Activated CD4-positive, alpha-beta memory T cell treated with anti-CD3 and anti-CD28 coated beads for 36 hours (primary cell): ENCODE measurements at regions of chr7 and their contacts with region 1.

Region 1: GRCh38 chr7:78039790-78040776 is 241.5 kb downstream of the PHTF2 start:
- DNase-seq: peak; percentile 70
- H3K4me3 Mint-ChIP-seq: no peak overlapping the region
- H3K27ac Mint-ChIP-seq: no peak overlapping the region
- H3K4me1 Mint-ChIP-seq: peaks cover 4% of the 10 kb centered on the region
- H3K27me3 Mint-ChIP-seq: peaks cover 16% of the 10 kb centered on the region

Region 2: DNA sequence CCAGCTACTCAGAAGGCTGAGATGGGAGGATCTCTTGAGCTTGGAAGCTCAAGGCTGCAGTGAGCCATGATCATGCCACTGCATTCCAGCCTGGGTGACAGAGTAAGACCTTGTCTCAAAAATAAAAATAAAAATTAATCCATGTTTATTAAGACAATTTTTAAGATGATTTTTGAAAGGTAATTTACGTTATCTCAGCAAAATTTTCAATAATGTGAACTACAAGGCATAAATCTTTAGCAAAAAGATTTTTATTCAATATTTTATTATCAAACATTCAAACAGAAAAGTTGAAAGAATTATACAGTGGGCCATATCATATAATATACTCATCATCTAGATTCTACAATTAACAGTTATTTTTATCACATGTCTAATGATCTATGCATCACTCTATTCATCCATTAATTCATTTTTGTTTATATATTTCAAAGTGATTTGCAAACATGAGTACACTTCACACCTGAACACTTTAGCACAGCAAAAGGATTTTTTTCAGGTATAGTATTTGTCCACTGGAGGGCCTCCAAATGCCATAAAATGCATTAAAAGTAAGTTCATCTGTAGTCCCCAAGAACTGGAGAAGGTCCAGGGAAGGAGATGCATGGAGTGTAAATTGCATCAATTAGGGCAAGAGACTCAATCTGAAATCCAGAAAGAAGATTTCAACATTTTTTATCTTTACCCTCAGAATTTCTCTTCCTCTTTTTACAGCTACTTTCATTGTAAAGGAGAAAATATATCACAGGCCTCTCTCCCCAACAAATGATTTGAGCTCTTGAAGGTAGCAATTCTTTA is 382.5 kb before region 1 on chr7:
- CTCF ChIA-PET with region 1: interaction called, 30 read pairs
- POLR2A ChIA-PET with region 1: no interaction called
- intact Hi-C with region 1: loop called (anchors 2 kb)
- DNase-seq: no peak
- H3K4me3 Mint-ChIP-seq: no peak overlapping the region
- H3K27ac Mint-ChIP-seq: no peak overlapping the region
- H3K4me1 Mint-ChIP-seq: no peaks in the 10 kb centered on the region
- H3K27me3 Mint-ChIP-seq: no peaks in the 10 kb centered on the region

Region 3: GRCh38 chr7:77867537-77867865 is 172.6 kb before region 1 on chr7:
- CTCF ChIA-PET with region 1: no interaction called
- POLR2A ChIA-PET with region 1: no interaction called
- intact Hi-C with region 1: no loop called
- DNase-seq: no peak
- H3K4me3 Mint-ChIP-seq: no peak overlapping the region
- H3K27ac Mint-ChIP-seq: no peak overlapping the region
- H3K4me1 Mint-ChIP-seq: peaks cover 38% of the 10 kb centered on the region
- H3K27me3 Mint-ChIP-seq: no peaks in the 10 kb centered on the region

Region 4: GRCh38 chr7:77940647-77941046 is 99.4 kb before region 1 on chr7:
- CTCF ChIA-PET with region 1: interaction called, 12 read pairs
- POLR2A ChIA-PET with region 1: no interaction called
- intact Hi-C with region 1: loop called (anchors 1 kb)
- DNase-seq: peak; percentile 18
- H3K4me3 Mint-ChIP-seq: no peak overlapping the region
- H3K27ac Mint-ChIP-seq: no peak overlapping the region
- H3K4me1 Mint-ChIP-seq: peaks cover 13% of the 10 kb centered on the region
- H3K27me3 Mint-ChIP-seq: no peaks in the 10 kb centered on the region

Region 5: DNA sequence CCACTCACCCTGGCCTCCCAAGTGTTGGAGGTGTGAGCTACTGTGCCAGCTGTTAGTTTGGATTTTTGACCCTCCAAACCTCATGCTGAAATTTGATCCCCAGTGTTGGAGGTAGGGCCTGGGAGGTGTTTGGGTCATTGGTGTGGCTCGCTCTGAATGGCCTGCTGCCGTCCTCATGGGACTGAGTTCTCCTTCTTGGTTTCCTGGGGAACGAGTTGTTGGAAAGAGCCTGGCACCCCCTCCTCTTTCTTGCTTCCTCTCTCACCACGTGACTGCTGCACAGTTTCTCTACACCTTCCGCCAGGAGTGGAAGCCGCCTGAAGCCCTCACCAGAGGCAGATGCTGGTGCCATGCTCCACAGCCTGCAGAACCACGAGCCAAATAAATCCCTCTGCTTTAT is 12.0 kb after region 1 on chr7:
- CTCF ChIA-PET with region 1: interaction called, 10 read pairs
- POLR2A ChIA-PET with region 1: no interaction called
- intact Hi-C with region 1: no loop called
- DNase-seq: no peak
- H3K4me3 Mint-ChIP-seq: no peak overlapping the region
- H3K27ac Mint-ChIP-seq: no peak overlapping the region
- H3K4me1 Mint-ChIP-seq: no peaks in the 10 kb centered on the region
- H3K27me3 Mint-ChIP-seq: peaks cover 7% of the 10 kb centered on the region